ENCODE measurements at regions of chr16 and their contacts with region 1.

Region 1: DNA sequence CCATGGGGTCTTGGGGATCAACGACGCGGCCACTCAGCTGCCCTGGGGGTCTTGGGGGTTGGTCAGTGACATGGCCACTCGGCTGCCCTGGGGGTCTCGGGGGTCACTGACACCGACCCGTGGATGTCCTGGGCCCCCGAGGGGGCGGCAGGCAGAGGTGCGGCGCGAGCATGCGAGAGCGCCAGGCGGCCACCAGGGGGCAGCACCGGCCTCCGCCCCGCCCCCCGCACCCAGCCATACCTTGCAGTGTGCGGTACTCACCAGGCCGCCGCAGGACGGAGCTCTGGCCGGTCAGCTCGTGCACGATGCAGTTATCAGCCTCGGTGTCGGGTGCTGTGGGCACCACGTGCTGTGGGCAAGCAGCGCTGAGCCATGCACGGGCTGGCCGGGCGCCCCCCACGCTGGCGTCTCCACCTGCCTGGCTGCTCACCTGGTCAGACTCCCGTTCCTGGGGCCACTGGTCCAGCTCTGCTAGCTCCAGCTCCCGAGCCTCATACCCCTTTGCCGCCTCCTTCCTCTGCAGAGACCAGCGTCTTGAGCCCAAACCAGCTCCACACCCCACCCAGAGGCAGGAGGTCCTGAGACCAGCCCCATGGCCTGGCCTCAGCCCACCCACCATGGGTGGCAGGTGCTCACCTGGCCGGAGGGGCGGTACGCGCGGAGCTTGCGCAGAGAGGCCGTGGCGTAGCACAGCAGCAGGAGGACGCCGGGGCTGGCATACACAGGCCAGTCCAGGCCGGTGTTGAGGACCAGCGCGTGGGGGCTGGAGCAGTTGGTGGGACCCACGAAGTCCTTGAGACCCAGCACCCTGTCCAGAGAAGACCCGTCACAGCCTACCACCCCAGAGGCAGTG is 31.2 kb downstream of the CTU2 start:
- DNase-seq: peak; percentile 77
- H3K4me3 Mint-ChIP-seq: no peak overlapping the region
- H3K27ac Mint-ChIP-seq: no peak overlapping the region
- H3K4me1 Mint-ChIP-seq: peaks cover 1% of the 10 kb centered on the region
- H3K27me3 Mint-ChIP-seq: no peaks in the 10 kb centered on the region

Region 2: DNA sequence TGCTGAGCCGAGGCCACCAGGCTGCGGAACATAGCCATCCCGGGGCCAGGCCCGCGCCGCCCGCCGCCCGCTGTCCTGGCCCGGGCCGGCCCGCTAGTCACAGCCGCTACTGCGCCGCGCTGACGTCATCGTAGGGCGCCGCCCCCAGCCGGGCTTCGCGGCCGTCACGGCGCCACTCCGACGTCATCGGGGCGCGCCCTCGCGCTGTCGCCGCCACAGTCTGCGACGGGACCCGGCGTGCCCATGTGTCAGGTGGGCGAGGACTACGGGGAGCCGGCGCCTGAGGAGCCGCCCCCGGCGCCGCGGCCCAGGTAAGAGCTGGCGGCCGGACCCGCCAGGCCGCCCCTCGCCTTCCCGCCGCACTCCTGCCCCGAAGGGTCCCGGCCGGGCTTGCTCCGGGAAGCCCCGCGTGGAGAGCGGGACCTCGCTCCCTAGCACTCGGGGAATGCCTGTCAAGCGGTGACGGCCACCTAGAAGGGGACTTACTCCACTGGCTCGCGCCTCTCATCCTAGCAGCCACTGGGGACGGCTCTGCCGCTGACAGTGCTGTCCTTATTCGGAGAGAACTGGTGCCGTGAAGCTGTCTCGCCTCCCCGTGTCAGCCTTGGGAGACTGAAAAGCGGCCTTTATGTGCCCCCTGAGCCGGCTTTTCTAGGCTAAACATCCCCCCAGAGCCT is 31.1 kb before region 1 on chr16 and contains the starts of genes CTU2 and RNF166:
- CTCF ChIA-PET with region 1: interaction called, 10 read pairs
- POLR2A ChIA-PET with region 1: no interaction called
- DNase-seq: peak; percentile 93
- H3K4me3 Mint-ChIP-seq: peak within 1 kb of the TSS; percentile 95
- H3K27ac Mint-ChIP-seq: peak within 1 kb of the TSS; percentile 98
- H3K4me1 Mint-ChIP-seq: peaks cover 44% of the 10 kb centered on the region
- H3K27me3 Mint-ChIP-seq: no peaks in the 10 kb centered on the region
- total RNA-seq, gene CTU2: 16.5 to 17.3 TPM
- total RNA-seq, gene RNF166: 155 to 156 TPM

Region 3: DNA sequence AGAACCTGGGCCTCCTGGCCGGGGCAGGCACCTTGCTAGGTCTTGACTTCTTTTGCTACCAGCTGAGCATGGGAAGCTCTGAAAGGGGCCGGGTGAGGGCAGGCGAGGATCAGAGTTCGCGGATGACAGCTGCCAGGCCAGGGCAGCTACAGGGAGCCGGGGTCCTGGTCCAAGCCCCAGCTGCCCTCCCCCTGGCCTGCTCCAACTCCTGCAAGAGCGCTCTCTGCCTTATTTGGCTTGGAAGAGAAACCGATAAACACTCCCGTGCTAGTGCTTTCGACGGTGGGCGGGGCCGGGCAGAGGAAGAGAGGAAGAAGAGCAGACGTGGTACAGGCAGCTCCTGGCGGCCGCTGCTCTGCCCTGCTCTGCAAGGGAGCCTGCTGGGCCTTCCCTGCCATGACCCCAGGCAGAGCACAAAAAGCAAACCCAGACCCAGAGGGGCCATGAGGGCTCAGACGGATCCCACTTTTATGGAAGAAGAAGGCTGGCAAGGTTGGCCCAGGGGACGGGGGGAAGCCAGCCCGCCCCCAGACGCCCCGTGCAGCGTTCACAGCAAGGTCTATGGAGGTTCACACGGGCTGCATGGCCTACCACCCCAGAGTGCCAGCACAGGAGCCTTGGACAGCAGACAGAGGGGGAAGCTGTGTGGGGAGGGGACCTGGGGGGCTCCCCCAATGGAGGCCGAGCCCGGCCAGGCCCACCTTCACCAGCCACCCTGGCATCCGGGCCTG is 21.9 kb after region 1 on chr16:
- CTCF ChIA-PET with region 1: interaction called, 12 read pairs
- POLR2A ChIA-PET with region 1: no interaction called
- DNase-seq: peak; percentile 73
- H3K4me3 Mint-ChIP-seq: peak overlapping the region; percentile 32
- H3K27ac Mint-ChIP-seq: peak overlapping the region; percentile 77
- H3K4me1 Mint-ChIP-seq: peaks cover 34% of the 10 kb centered on the region
- H3K27me3 Mint-ChIP-seq: no peaks in the 10 kb centered on the region

Region 4: DNA sequence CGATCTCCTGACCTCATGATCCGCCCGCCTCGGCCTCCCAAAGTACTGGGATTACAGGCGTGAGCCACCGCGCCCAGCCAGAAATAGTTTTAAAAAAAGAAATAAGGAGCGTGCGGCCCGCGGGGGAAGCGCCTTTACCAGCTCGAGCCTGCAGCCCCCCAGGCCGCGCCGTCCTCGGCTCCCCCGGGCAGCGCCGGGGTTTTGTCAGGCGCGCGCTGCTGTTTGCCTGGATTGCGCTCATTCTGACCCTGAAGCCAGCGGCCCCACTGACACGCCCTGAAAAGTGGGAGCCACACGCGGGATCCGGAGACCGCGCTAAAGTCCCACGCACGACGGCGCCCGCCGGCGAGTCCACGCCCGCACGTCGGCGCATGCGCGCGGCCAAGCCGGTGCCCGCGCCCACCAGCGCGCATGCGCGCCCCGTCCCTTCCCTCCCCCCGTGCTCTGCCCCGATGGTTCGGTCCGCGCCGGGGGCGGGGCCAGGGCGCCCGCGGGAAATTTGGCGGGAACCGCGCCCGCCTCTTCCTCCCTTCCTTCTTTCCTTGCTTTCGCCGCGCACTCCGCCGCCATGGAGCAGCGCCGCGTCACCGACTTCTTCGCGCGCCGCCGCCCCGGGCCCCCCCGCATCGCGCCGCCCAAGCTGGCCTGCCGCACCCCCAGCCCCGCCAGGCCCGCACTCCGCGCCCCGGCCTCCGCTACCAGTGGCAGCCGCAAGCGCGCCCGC is 65.9 kb after region 1 on chr16 and contains the start of gene CDT1:
- CTCF ChIA-PET with region 1: interaction called, 14 read pairs
- POLR2A ChIA-PET with region 1: interaction called, 3 read pairs
- DNase-seq: peak; percentile 88
- H3K4me3 Mint-ChIP-seq: peak within 1 kb of the TSS; percentile 86
- H3K27ac Mint-ChIP-seq: peak within 1 kb of the TSS; percentile 93
- H3K4me1 Mint-ChIP-seq: peaks cover 35% of the 10 kb centered on the region
- H3K27me3 Mint-ChIP-seq: no peaks in the 10 kb centered on the region
- total RNA-seq, gene CDT1: 133 to 137 TPM

Region 5: GRCh38 chr16:88811769-88812512 is 74.4 kb after region 1 on chr16 and contains the start of gene APRT:
- CTCF ChIA-PET with region 1: interaction called, 22 read pairs
- POLR2A ChIA-PET with region 1: interaction called, 6 read pairs
- DNase-seq: peak; percentile 97
- H3K4me3 Mint-ChIP-seq: peak within 1 kb of the TSS; percentile 92
- H3K27ac Mint-ChIP-seq: peak within 1 kb of the TSS; percentile 99
- H3K4me1 Mint-ChIP-seq: peaks cover 33% of the 10 kb centered on the region
- H3K27me3 Mint-ChIP-seq: no peaks in the 10 kb centered on the region
- total RNA-seq, gene APRT: 129 to 136 TPM

Region 6: GRCh38 chr16:88856828-88857733 is 119.6 kb after region 1 on chr16 and contains the starts of genes GALNS and TRAPPC2L:
- CTCF ChIA-PET with region 1: interaction called, 16 read pairs
- POLR2A ChIA-PET with region 1: no interaction called
- DNase-seq: peak; percentile 99
- H3K4me3 Mint-ChIP-seq: peak within 1 kb of the TSS; percentile 97
- H3K27ac Mint-ChIP-seq: peak within 1 kb of the TSS; percentile 82
- H3K4me1 Mint-ChIP-seq: peaks cover 33% of the 10 kb centered on the region
- H3K27me3 Mint-ChIP-seq: no peaks in the 10 kb centered on the region
- total RNA-seq, gene GALNS: 35.2 to 38.2 TPM
- total RNA-seq, gene TRAPPC2L: 44.9 to 45.8 TPM

Measured in activated CD4-positive, alpha-beta memory T cell treated with anti-CD3 and anti-CD28 coated beads, Interleukin-2, amount 10 ng/mL, durations not matched to agents 7 days and 5 days (primary cell).